H1 (cell line): ENCODE measurements at regions of chr6 and their contacts with region 1.

Region 1: DNA sequence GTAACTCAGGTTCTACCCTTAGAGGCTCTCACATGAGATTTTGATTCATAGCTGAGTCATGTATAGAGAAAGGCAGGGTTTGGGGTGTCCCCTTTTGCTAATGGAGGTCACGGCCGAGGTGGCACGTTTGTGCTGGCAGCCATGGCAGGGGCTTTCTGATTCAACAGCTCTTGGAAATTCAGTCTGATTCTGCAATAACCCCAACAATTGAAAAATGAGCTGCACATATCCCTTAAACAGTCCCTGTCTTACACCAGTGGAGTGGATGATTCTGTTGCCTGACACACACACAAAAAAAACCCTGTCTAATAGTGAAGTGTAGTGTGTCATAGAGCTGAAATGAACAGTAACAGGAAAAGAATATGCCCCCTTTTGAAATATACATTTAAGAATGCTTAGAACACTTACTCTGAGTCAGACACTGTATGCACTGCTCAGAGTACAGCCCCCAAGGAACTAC is 40.4 kb upstream of the ARG1 start:
- DNase-seq: no peak
- H3K4me3 ChIP-seq: no peak overlapping the region
- H3K27ac ChIP-seq: no peak overlapping the region
- H3K4me1 ChIP-seq: no peaks in the 10 kb centered on the region
- H3K27me3 ChIP-seq: no peaks in the 10 kb centered on the region
- CTCF ChIP-seq: no peak
- EP300 ChIP-seq: no peak
- POLR2A ChIP-seq: no peak
- RAD21 ChIP-seq: no peak

Region 2: DNA sequence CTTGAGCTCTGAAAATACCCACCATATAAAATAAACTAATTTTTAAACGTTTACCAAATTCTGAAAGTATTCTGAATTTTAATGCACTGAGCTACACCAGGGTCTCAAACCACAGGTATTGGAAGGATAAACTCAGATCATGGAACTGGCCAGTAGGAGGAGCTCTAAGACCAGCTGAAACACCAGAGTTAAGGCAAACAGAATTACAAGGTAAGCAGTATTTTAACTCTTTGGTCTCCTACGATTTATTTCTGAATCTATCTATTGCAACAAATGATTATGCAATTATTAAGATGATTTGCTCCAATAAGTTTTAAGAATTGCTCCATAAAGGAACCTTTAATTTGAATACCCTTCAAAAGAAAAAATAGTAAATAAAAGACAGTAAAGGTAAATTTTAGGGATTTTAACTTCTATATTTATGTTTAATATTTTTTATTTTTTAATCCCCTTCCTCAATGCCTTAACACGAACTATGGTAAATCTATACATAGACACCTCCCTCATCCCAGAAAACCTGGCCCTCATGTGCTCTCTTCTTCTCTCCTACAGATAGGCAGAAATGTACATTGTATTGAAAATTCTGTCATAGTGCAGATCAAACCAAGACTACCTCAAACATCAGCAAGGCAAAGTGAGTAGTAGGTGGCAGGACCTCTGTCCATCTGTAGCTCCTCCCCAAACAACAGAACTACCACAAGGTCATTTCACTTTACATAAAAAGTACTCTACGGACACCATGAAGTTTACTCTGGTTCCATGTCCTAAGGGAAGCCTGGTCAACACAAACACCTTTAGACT is 647.0 kb before region 1 on chr6:
- CTCF ChIA-PET with region 1: interaction called, 23 read pairs
- POLR2A ChIA-PET with region 1: no interaction called
- DNase-seq: peak in 1 of 2 experiments; percentile 78
- H3K4me3 ChIP-seq: no peak overlapping the region
- H3K27ac ChIP-seq: no peak overlapping the region
- H3K4me1 ChIP-seq: no peaks in the 10 kb centered on the region
- H3K27me3 ChIP-seq: no peaks in the 10 kb centered on the region
- CTCF ChIP-seq: peak in 2 of 3 experiments; percentile 83 to 86; a peak in 3 of 4 replicates
- EP300 ChIP-seq: no peak
- POLR2A ChIP-seq: no peak
- RAD21 ChIP-seq: peak; percentile 98 to 100

Region 3: GRCh38 chr6:131182991-131183425 is 349.6 kb before region 1 on chr6:
- CTCF ChIA-PET with region 1: interaction called, 73 read pairs
- POLR2A ChIA-PET with region 1: interaction called, 3 read pairs
- DNase-seq: peak in 1 of 2 experiments; percentile 65
- H3K4me3 ChIP-seq: no peak overlapping the region
- H3K27ac ChIP-seq: no peak overlapping the region; the same call in 1 of the 2 replicates
- H3K4me1 ChIP-seq: peaks cover 0 to 11% (median 5%) of the 10 kb centered on the region in 4 experiments; a peak in 4 of 7 replicates
- H3K27me3 ChIP-seq: no peaks in the 10 kb centered on the region
- CTCF ChIP-seq: peak in 2 of 3 experiments; percentile 40 to 55; a peak in 2 of 4 replicates
- EP300 ChIP-seq: no peak
- POLR2A ChIP-seq: no peak
- RAD21 ChIP-seq: peak; percentile 50 to 57

Region 4: GRCh38 chr6:131199568-131200272 is 332.9 kb before region 1 on chr6:
- CTCF ChIA-PET with region 1: interaction called, 16 read pairs
- POLR2A ChIA-PET with region 1: no interaction called
- DNase-seq: peak in 1 of 2 experiments; percentile 36
- H3K4me3 ChIP-seq: no peak overlapping the region
- H3K27ac ChIP-seq: no peak overlapping the region
- H3K4me1 ChIP-seq: peaks cover 0 to 3% (median 0%) of the 10 kb centered on the region in 4 experiments; a peak in 1 of 7 replicates
- H3K27me3 ChIP-seq: no peaks in the 10 kb centered on the region
- CTCF ChIP-seq: peak; percentile 34 to 86 (median 76)
- EP300 ChIP-seq: no peak
- POLR2A ChIP-seq: no peak
- RAD21 ChIP-seq: peak; percentile 89 to 91

Region 5: GRCh38 chr6:131460614-131461000 is 72.0 kb before region 1 on chr6:
- CTCF ChIA-PET with region 1: interaction called, 13 read pairs
- POLR2A ChIA-PET with region 1: no interaction called
- DNase-seq: no peak
- H3K4me3 ChIP-seq: no peak overlapping the region
- H3K27ac ChIP-seq: no peak overlapping the region
- H3K4me1 ChIP-seq: peaks cover 0 to 7% (median 0%) of the 10 kb centered on the region in 4 experiments; a peak in 1 of 7 replicates
- H3K27me3 ChIP-seq: no peaks in the 10 kb centered on the region
- CTCF ChIP-seq: no peak
- EP300 ChIP-seq: no peak
- POLR2A ChIP-seq: no peak
- RAD21 ChIP-seq: no peak

Region 6: GRCh38 chr6:131519670-131520436 is 12.8 kb before region 1 on chr6:
- CTCF ChIA-PET with region 1: interaction called, 45 read pairs
- POLR2A ChIA-PET with region 1: no interaction called
- DNase-seq: peak in 1 of 2 experiments; percentile 62
- H3K4me3 ChIP-seq: no peak overlapping the region
- H3K27ac ChIP-seq: no peak overlapping the region
- H3K4me1 ChIP-seq: no peaks in the 10 kb centered on the region
- H3K27me3 ChIP-seq: no peaks in the 10 kb centered on the region
- CTCF ChIP-seq: peak in 2 of 3 experiments; percentile 54 to 81; a peak in 3 of 4 replicates
- EP300 ChIP-seq: no peak
- POLR2A ChIP-seq: no peak
- RAD21 ChIP-seq: peak; percentile 64 to 77

Region 7: DNA sequence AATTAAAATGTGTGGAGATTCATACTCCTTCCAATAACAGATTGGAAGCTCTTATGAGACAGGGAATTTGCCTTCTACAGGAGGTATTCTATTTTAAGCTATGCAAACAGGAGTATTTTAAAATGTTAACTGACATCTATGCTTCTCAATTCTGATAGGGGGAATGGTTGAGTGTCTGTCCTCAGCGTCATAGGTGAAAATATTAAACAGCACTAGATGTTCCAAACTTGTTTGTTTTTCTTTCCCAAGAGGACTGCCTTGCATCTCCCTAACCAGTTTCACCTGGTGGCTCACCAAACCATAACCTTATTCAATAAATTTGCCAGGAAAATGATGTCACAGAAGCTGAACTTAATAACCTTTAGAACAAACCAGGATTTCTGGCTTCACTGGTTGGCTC is 15.8 kb after region 1 on chr6:
- CTCF ChIA-PET with region 1: interaction called, 14 read pairs
- POLR2A ChIA-PET with region 1: no interaction called
- DNase-seq: no peak
- H3K4me3 ChIP-seq: no peak overlapping the region
- H3K27ac ChIP-seq: no peak overlapping the region
- H3K4me1 ChIP-seq: no peaks in the 10 kb centered on the region
- H3K27me3 ChIP-seq: no peaks in the 10 kb centered on the region
- CTCF ChIP-seq: no peak
- EP300 ChIP-seq: no peak
- POLR2A ChIP-seq: no peak
- RAD21 ChIP-seq: no peak

Region 8: GRCh38 chr6:131627724-131628682 is 95.4 kb after region 1 on chr6 and contains the start of gene MED23:
- CTCF ChIA-PET with region 1: no interaction called
- POLR2A ChIA-PET with region 1: no interaction called
- DNase-seq: peak; percentile 95 to 100
- H3K4me3 ChIP-seq: peak within 1 kb of the TSS; percentile 79 to 92 (median 83)
- H3K27ac ChIP-seq: peak within 1 kb of the TSS; percentile 41; the same call in 1 of the 2 replicates
- H3K4me1 ChIP-seq: no peaks in the 10 kb centered on the region
- H3K27me3 ChIP-seq: no peaks in the 10 kb centered on the region
- CTCF ChIP-seq: peak; percentile 96 to 100 (median 99)
- EP300 ChIP-seq: peak; percentile 44 to 87
- POLR2A ChIP-seq: peak in 1 of 2 experiments; percentile 85; a peak in 2 of 3 replicates
- RAD21 ChIP-seq: peak; percentile 92 to 96
- total RNA-seq, gene MED23: 13.0 and 13.8 TPM in 2 replicates